K562 (cell line): ENCODE measurements at regions of chr3 and their contacts with region 1.

Region 1: GRCh38 chr3:120182724-120183524 is 88.7 kb upstream of the GSK3B start:
- DNase-seq: peak in 2 of 4 experiments; percentile 6 to 9
- ATAC-seq: peak; percentile 58; the same call in 1 of the 3 replicates
- H3K4me3 ChIP-seq: no peak overlapping the region
- H3K27ac ChIP-seq: no peak overlapping the region
- H3K4me1 ChIP-seq: no peaks in the 10 kb centered on the region
- H3K27me3 ChIP-seq: peaks cover 0 to 4% of the 10 kb centered on the region in 2 experiments; a peak in 2 of 5 replicates
- CTCF ChIP-seq: peak; percentile 22 to 45 (median 38); a peak in 3 of 6 replicates
- EP300 ChIP-seq: no peak
- POLR2A ChIP-seq: no peak
- RAD21 ChIP-seq: peak; percentile 46 to 67

Region 2: GRCh38 chr3:119819806-119820205 is 363.1 kb before region 1 on chr3:
- CTCF ChIA-PET with region 1: interaction called, 4 read pairs
- POLR2A ChIA-PET with region 1: no interaction called
- in situ Hi-C with region 1: no loop called
- intact Hi-C with region 1: loop called (anchors 10 kb)
- DNase-seq: no peak
- ATAC-seq: no peak; the same call in 2 of the 3 replicates
- H3K4me3 ChIP-seq: no peak overlapping the region
- H3K27ac ChIP-seq: no peak overlapping the region
- H3K4me1 ChIP-seq: no peaks in the 10 kb centered on the region
- H3K27me3 ChIP-seq: peaks cover 6 to 20% of the 10 kb centered on the region in 2 experiments; a peak in 4 of 5 replicates
- CTCF ChIP-seq: no peak
- EP300 ChIP-seq: no peak
- POLR2A ChIP-seq: no peak
- RAD21 ChIP-seq: no peak

Region 3: DNA sequence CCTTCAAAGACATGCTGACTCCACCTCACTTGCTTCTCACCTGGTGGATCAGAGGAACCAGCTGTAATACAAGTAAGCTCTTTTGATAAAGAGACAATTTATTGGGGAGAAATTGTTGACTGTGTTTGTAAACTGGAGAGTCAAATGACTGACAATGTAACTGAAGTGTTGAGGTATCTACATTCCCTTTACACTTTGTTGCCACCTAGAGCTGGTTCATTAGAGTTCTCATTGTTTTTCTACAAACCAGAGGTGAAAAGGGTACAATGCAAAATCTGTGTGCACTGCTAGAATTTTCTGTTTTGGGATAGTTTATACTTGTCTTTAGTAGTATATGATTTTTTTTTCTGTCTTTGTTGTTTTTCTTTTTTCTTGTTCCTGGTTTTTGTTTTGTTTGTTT is 174.9 kb after region 1 on chr3:
- CTCF ChIA-PET with region 1: no interaction called
- POLR2A ChIA-PET with region 1: no interaction called
- in situ Hi-C with region 1: no loop called
- intact Hi-C with region 1: no loop called
- DNase-seq: no peak
- ATAC-seq: no peak
- H3K4me3 ChIP-seq: no peak overlapping the region
- H3K27ac ChIP-seq: no peak overlapping the region
- H3K4me1 ChIP-seq: no peaks in the 10 kb centered on the region
- H3K27me3 ChIP-seq: no peaks in the 10 kb centered on the region; a peak in 1 of 5 replicates
- CTCF ChIP-seq: no peak
- EP300 ChIP-seq: no peak
- POLR2A ChIP-seq: no peak
- RAD21 ChIP-seq: no peak